ENCODE measurements at regions of chr5 and their contacts with region 1.

Region 1: GRCh38 chr5:82931110-82931509 is 146.1 kb downstream of the TMEM167A start:
- DNase-seq: no peak
- H3K4me3 ChIP-seq: no peak overlapping the region
- H3K27ac ChIP-seq: peak overlapping the region; percentile 39; the same call in 1 of the 2 replicates
- H3K4me1 ChIP-seq: peaks cover 13% of the 10 kb centered on the region; the same call in 1 of the 2 replicates
- H3K27me3 ChIP-seq: no peaks in the 10 kb centered on the region
- CTCF ChIP-seq: no peak

Region 2: DNA sequence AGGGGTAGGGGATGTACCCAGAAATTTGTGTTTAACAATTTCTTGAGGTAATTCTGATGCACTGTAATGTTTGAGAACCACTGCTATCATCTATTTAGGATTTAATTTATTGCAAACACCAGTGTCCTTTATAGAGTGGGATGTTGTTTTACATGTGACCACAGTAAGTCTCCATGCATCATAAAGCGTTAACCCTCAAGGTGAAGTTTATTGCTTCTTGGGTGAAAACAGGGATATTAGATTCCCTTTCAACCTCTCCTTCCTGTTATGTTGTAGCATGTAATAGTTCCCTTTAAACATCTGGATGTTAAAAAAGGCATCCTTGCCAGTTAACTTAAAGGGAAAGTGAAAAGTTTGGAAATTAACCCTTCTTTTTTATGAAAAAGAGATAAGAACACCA is 995.0 kb before region 1 on chr5:
- CTCF ChIA-PET with region 1: interaction called, 18 read pairs
- POLR2A ChIA-PET with region 1: no interaction called
- intact Hi-C with region 1: no loop called
- DNase-seq: no peak
- H3K4me3 ChIP-seq: no peak overlapping the region
- H3K27ac ChIP-seq: no peak overlapping the region
- H3K4me1 ChIP-seq: no peaks in the 10 kb centered on the region
- H3K27me3 ChIP-seq: no peaks in the 10 kb centered on the region
- CTCF ChIP-seq: no peak

Region 3: DNA sequence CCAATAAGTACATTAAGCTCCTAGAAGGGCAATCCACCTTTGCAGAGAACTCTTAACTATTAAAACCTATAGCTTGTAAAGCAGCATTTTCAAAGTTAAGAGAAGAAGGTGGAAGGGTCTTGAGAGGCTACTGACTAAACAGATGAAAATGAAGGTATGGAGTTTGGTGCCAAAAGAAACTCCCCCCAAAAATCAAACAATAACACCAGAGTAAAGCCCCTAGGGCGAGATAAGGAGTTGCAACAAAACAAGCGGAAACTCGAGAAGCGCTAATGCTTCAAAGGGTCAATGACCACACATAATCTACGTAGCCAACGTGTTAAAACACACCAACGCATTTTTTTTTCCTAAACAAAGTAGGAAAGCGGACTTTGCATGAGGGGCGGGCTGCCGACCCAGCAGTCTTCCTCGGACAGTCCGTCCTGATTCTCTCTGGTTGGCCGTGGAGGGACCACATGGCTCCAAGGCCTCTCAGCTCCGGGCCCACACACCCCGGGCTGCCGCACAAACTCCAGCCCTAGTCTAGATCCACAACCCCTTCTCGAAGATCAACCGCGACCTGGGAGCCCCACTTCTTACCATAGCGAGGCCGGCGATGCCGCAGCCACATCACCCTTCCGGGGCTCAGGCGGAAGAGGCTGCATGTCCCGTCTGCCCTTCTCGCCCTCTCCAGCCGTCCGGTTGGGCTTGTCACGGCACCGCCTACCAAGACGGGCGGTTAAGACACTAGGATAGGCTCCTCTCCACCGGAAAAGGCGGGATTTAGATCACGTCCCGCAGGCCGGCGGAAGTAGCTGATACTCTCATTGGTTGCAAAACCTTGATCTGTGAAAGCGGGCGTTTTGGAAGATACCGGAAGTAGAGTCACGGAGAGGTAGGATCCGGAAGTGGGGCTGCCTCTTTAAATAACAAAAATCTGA is 145.9 kb after region 1 on chr5 and contains the starts of genes TMEM167A and XRCC4:
- CTCF ChIA-PET with region 1: no interaction called
- POLR2A ChIA-PET with region 1: no interaction called
- intact Hi-C with region 1: loop called (anchors 2 kb)
- DNase-seq: peak; percentile 92 to 97
- H3K4me3 ChIP-seq: peak within 1 kb of the TSS; percentile 70
- H3K27ac ChIP-seq: peak within 1 kb of the TSS; percentile 69
- H3K4me1 ChIP-seq: peaks cover 17% of the 10 kb centered on the region
- H3K27me3 ChIP-seq: no peaks in the 10 kb centered on the region
- CTCF ChIP-seq: no peak
- total RNA-seq, gene TMEM167A: 64.2 and 82.7 TPM in 2 replicates
- total RNA-seq, gene XRCC4: 10.2 and 12.2 TPM in 2 replicates

Measured in PC-9 (cell line).